OCI-LY7 (cell line): ENCODE measurements at regions of chr17 and their contacts with region 1.

Region 1: DNA sequence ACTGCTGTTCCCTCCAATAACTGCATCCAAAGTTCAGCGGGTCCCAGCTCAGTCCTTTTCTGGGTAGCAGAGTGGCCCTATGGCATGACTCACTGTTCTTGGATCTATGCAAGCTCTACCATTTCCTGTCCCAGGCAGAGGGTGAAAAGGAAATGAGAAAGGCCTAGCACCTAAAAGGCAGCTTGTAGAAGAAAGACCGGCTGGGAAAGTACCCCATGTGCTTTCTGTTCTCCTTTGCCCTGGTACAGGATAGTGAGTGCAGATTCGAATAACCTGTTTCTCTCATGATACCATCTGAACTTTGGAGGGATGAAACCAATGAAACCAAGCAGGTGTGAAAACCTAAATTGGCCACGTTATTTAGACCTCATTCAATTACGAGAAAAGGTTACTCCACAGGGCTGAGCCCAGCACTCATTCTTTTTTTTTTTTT is 12.7 kb upstream of the HASPIN start:
- DNase-seq: peak; percentile 96
- H3K4me3 ChIP-seq: peak overlapping the region; percentile 52
- H3K27ac ChIP-seq: peak overlapping the region; percentile 96
- H3K4me1 ChIP-seq: peaks cover 70% of the 10 kb centered on the region
- CTCF ChIP-seq: no peak

Region 2: GRCh38 chr17:3647769-3648555 is 63.0 kb before region 1 on chr17:
- CTCF ChIA-PET with region 1: no interaction called
- POLR2A ChIA-PET with region 1: no interaction called
- intact Hi-C with region 1: no loop called
- DNase-seq: peak; percentile 78
- H3K4me3 ChIP-seq: no peak overlapping the region
- H3K27ac ChIP-seq: no peak overlapping the region
- H3K4me1 ChIP-seq: peaks cover 32% of the 10 kb centered on the region
- CTCF ChIP-seq: peak; percentile 76

Region 3: GRCh38 chr17:3695723-3696411 is 15.1 kb before region 1 on chr17 and contains the start of gene P2RX5:
- CTCF ChIA-PET with region 1: interaction called, 4 read pairs
- POLR2A ChIA-PET with region 1: interaction called, 16 read pairs
- intact Hi-C with region 1: loop called (anchors 1 kb)
- DNase-seq: peak; percentile 87
- H3K4me3 ChIP-seq: peak within 1 kb of the TSS; percentile 79
- H3K27ac ChIP-seq: peak within 1 kb of the TSS; percentile 87
- H3K4me1 ChIP-seq: peaks cover 38% of the 10 kb centered on the region
- CTCF ChIP-seq: no peak
- total RNA-seq, gene P2RX5: 143 and 150 TPM in 2 replicates